ENCODE measurements at regions of chr5 and their contacts with region 1.

Region 1: GRCh38 chr5:72799721-72800120 is 16.7 kb upstream of the TNPO1 start:
- DNase-seq: no peak
- ATAC-seq: no peak
- H3K4me3 ChIP-seq: no peak overlapping the region
- H3K27ac ChIP-seq: no peak overlapping the region
- H3K4me1 ChIP-seq: no peaks in the 10 kb centered on the region
- H3K27me3 ChIP-seq: no peaks in the 10 kb centered on the region
- CTCF ChIP-seq: no peak
- POLR2A ChIP-seq: no peak
- RAD21 ChIP-seq: no peak

Region 2: GRCh38 chr5:72703876-72704275 is 95.8 kb before region 1 on chr5:
- CTCF ChIA-PET with region 1: no interaction called
- POLR2A ChIA-PET with region 1: no interaction called
- RAD21 ChIA-PET with region 1: no interaction called
- intact Hi-C with region 1: loop called (anchors 1 kb)
- DNase-seq: no peak
- ATAC-seq: no peak
- H3K4me3 ChIP-seq: no peak overlapping the region
- H3K27ac ChIP-seq: no peak overlapping the region
- H3K4me1 ChIP-seq: no peaks in the 10 kb centered on the region
- H3K27me3 ChIP-seq: no peaks in the 10 kb centered on the region
- CTCF ChIP-seq: no peak
- POLR2A ChIP-seq: no peak
- RAD21 ChIP-seq: no peak

Region 3: GRCh38 chr5:73152411-73153388 is 353.0 kb after region 1 on chr5:
- CTCF ChIA-PET with region 1: no interaction called
- POLR2A ChIA-PET with region 1: no interaction called
- RAD21 ChIA-PET with region 1: no interaction called
- intact Hi-C with region 1: no loop called
- DNase-seq: peak; percentile 6
- ATAC-seq: peak; percentile 79
- H3K4me3 ChIP-seq: no peak overlapping the region
- H3K27ac ChIP-seq: no peak overlapping the region
- H3K4me1 ChIP-seq: no peaks in the 10 kb centered on the region
- H3K27me3 ChIP-seq: no peaks in the 10 kb centered on the region
- CTCF ChIP-seq: peak; percentile 33 to 39 (median 37); a peak in 5 of 6 replicates
- POLR2A ChIP-seq: no peak
- RAD21 ChIP-seq: peak; percentile 53; the same call in 1 of the 2 replicates